ENCODE measurements at regions of chr3 and their contacts with region 1.

Region 1: GRCh38 chr3:12294885-12295580 is 6.2 kb downstream of the PPARG start:
- DNase-seq: no peak
- H3K4me3 Mint-ChIP-seq: peak overlapping the region; percentile 84
- H3K27ac Mint-ChIP-seq: no peak overlapping the region
- H3K4me1 Mint-ChIP-seq: peaks cover 31% of the 10 kb centered on the region
- H3K27me3 Mint-ChIP-seq: no peaks in the 10 kb centered on the region
- CTCF ChIP-seq: no peak

Region 2: GRCh38 chr3:12139111-12139511 is 155.9 kb before region 1 on chr3:
- CTCF ChIA-PET with region 1: no interaction called
- intact Hi-C with region 1: no loop called
- DNase-seq: peak; percentile 44
- H3K4me3 Mint-ChIP-seq: no peak overlapping the region
- H3K27ac Mint-ChIP-seq: no peak overlapping the region
- H3K4me1 Mint-ChIP-seq: peaks cover 13% of the 10 kb centered on the region
- H3K27me3 Mint-ChIP-seq: peaks cover 9% of the 10 kb centered on the region
- CTCF ChIP-seq: peak; percentile 23

Region 3: DNA sequence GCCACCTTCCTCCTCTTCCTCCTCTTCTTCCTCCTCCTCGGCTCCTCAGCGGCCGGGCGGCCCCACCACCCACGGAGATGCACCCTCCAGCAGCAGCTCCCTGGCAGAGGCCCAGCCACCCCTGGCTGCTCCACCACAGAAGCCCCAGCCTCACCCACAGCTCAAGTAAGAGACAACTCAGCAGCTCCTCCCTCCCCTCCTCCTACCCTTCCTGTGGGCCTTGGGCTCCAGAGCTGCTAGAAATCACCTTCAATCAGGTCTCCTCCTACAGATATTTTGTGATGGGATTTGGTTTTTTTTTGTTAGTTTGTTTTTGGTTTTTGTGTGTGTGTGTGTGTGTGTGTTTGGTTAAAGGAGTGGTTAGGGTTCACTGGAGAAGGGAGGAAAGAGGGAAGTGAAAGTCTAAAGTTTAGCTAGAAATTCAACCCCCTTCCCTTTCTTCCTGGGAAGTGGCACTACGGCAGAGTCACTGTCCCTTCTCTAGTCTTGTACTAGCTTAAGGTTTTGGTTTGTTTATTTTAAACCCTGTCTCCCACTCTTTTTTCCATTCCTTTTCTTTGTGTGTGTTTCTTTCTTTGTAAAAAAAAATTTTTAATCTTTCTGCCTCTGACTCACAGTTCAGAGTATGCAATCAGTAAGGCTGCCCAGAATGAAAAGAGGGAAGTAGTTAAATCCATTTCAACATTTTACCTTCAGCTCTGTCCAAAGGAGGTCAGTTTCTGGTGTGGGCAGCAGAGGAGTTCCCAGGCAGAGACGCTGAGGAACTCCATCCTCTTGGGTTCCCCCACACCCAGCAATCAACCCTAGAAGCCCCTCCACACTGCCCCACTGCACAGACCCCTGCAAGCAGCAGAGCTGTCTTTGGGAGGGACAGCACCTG is 107.3 kb before region 1 on chr3:
- CTCF ChIA-PET with region 1: no interaction called
- intact Hi-C with region 1: no loop called
- DNase-seq: no peak
- H3K4me3 Mint-ChIP-seq: peak overlapping the region; percentile 35
- H3K27ac Mint-ChIP-seq: peak overlapping the region; percentile 46
- H3K4me1 Mint-ChIP-seq: peaks cover 46% of the 10 kb centered on the region
- H3K27me3 Mint-ChIP-seq: no peaks in the 10 kb centered on the region
- CTCF ChIP-seq: no peak

Region 4: DNA sequence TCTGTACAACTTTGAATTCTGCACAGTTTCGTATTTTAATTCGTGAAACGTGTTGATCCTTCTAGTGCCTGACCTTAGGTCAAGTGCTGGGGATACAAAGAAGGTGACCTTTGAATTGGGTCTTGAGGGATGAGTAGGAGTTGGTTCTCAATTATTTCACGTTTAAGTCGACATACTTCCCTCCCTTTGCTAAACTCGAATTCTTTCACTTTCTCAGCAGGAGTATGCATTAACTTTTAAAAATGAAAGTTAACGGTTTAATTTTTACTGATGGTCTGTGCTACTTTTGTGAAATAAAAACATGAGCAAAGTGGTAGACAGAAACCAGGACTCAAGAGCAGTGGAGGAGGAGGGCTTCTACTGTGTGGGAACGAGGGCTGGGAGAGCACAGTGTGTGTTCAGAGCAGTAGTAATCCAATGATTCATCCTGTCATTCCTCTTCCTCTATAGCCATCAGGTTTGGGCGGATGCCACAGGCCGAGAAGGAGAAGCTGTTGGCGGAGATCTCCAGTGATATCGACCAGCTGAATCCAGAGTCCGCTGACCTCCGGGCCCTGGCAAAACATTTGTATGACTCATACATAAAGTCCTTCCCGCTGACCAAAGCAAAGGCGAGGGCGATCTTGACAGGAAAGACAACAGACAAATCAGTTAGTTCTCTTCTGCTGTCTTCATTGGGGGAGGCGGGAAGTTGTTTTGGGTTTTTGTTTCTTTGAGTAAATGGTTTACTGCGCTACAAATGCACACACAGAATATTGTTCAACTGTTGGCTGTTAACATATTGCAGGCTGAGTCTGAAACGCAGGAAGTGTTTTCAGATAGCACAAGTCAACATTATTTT is 110.6 kb after region 1 on chr3:
- CTCF ChIA-PET with region 1: no interaction called
- intact Hi-C with region 1: loop called (anchors 5 kb)
- DNase-seq: peak; percentile 85
- H3K4me3 Mint-ChIP-seq: peak overlapping the region; percentile 55
- H3K27ac Mint-ChIP-seq: peak overlapping the region; percentile 85
- H3K4me1 Mint-ChIP-seq: peaks cover 46% of the 10 kb centered on the region
- H3K27me3 Mint-ChIP-seq: no peaks in the 10 kb centered on the region
- CTCF ChIP-seq: no peak

Region 5: DNA sequence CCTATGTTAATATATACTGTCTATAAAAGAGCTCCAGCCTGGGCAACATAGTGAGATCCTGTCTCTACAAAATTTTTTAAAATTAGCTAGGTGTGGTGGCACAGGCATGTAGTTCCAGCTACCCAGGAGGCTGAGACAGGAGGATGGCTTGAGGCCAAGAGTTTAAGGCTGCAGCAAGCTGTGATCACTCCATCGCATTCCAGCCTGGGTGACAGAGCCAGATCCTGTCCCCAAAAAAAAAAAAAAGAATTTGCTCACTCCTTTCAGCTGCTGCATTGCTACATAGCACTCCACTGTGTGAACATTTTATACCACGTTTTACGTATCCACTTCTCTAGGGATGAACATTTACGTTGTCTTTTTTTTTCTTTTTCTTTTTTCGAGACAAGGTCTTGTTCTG is 183.3 kb after region 1 on chr3:
- CTCF ChIA-PET with region 1: interaction called, 10 read pairs
- intact Hi-C with region 1: no loop called
- DNase-seq: no peak
- H3K4me3 Mint-ChIP-seq: no peak overlapping the region
- H3K27ac Mint-ChIP-seq: no peak overlapping the region
- H3K4me1 Mint-ChIP-seq: peaks cover 52% of the 10 kb centered on the region
- H3K27me3 Mint-ChIP-seq: no peaks in the 10 kb centered on the region
- CTCF ChIP-seq: no peak